AG04450 (cell line): ENCODE measurements at regions of chr1 and their contacts with region 1.

Region 1: GRCh38 chr1:59759156-59759925 is 55.4 kb upstream of the HOOK1 start:
- DNase-seq: peak; percentile 77
- H3K4me3 ChIP-seq: no peak overlapping the region
- H3K27ac ChIP-seq: no peak overlapping the region
- H3K27me3 ChIP-seq: no peaks in the 10 kb centered on the region
- CTCF ChIP-seq: peak; percentile 98

Region 2: GRCh38 chr1:58739856-58740466 is 1019.4 kb before region 1 on chr1:
- CTCF ChIA-PET with region 1: interaction called, 33 read pairs
- POLR2A ChIA-PET with region 1: interaction called, 3 read pairs
- DNase-seq: no peak
- H3K4me3 ChIP-seq: no peak overlapping the region
- H3K27ac ChIP-seq: no peak overlapping the region
- H3K27me3 ChIP-seq: no peaks in the 10 kb centered on the region
- CTCF ChIP-seq: peak; percentile 78

Region 3: GRCh38 chr1:59432531-59433439 is 326.6 kb before region 1 on chr1:
- CTCF ChIA-PET with region 1: no interaction called
- POLR2A ChIA-PET with region 1: no interaction called
- DNase-seq: no peak
- H3K4me3 ChIP-seq: no peak overlapping the region
- H3K27ac ChIP-seq: no peak overlapping the region
- H3K27me3 ChIP-seq: no peaks in the 10 kb centered on the region
- CTCF ChIP-seq: no peak

Region 4: GRCh38 chr1:59707178-59707791 is 52.1 kb before region 1 on chr1:
- CTCF ChIA-PET with region 1: interaction called, 22 read pairs
- POLR2A ChIA-PET with region 1: interaction called, 5 read pairs
- DNase-seq: peak; percentile 89
- H3K4me3 ChIP-seq: no peak overlapping the region
- H3K27ac ChIP-seq: peak overlapping the region; percentile 87
- H3K27me3 ChIP-seq: no peaks in the 10 kb centered on the region
- CTCF ChIP-seq: no peak

Region 5: GRCh38 chr1:60055336-60055735 is 296.0 kb after region 1 on chr1:
- CTCF ChIA-PET with region 1: no interaction called
- POLR2A ChIA-PET with region 1: no interaction called
- DNase-seq: no peak
- H3K4me3 ChIP-seq: no peak overlapping the region
- H3K27ac ChIP-seq: no peak overlapping the region
- H3K27me3 ChIP-seq: no peaks in the 10 kb centered on the region
- CTCF ChIP-seq: no peak